ENCODE measurements at regions of chr16 and their contacts with region 1.

Region 1: DNA sequence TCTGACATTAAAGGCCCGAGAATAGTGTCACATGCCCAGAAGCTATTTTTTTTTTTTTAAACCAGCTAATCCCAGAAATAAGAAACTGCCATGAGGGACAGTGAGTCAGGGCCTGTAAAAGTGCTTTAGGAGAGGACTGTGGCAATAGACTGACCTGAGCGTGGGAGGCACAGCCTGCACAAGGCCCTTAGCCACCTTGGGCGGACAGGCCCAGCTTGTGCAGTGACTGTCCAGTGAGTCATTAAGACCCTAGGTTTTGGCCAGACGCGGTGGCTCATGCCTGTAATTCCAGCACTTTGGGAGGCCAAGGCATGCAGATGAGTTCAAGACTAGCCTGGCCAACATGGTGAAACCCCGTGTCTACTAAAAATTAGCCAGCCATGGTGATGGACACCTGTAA is 343.0 kb upstream of the ZFHX3 start:
- DNase-seq: peak; percentile 70
- H3K4me3 ChIP-seq: no peak overlapping the region
- H3K27me3 ChIP-seq: no peaks in the 10 kb centered on the region
- CTCF ChIP-seq: no peak

Region 2: DNA sequence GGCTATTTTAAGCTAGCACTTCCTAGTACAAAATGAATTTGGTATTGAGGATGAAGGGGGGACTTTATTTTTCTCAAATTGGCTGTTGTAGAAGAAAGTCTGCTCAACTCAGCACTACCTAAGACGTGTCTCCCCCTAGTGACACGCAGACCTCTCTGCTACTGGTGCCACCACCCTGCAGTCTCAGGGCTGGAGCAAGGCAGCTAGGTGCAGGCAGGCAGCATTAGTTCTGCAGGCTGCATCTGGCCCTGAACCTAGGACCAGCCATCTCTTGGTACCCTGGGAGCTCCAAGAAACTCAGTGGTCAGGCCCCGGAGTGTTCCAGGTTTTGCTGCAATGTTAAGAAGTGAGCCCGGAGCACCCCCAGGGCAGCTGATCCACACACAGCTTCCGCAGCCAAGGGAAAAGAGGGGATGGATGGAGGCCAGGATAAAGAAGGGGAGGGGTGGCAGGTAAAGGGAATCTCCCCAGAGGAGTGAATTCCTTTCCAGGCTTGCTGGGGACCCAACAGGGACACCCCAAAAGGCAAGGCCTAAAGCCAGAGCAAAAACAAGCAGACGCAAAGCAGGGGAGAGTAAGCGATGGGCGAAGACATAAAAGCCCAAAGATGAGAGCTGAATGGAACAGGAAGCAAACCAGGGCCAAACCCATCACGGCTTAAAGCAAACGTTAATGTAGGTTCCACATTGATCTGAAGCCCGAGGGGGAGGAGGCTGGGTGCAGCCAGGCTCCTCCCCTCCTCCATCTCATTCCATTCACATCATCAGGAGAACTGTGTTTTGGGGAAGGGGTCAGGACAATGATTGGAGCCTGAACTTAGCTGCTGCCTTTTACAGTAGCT is 543.5 kb before region 1 on chr16:
- CTCF ChIA-PET with region 1: no interaction called
- POLR2A ChIA-PET with region 1: interaction called, 19 read pairs
- DNase-seq: no peak
- H3K4me3 ChIP-seq: no peak overlapping the region
- H3K27me3 ChIP-seq: no peaks in the 10 kb centered on the region
- CTCF ChIP-seq: peak; percentile 50

Region 3: GRCh38 chr16:73106326-73106725 is 284.6 kb before region 1 on chr16:
- CTCF ChIA-PET with region 1: no interaction called
- POLR2A ChIA-PET with region 1: no interaction called
- DNase-seq: no peak
- H3K4me3 ChIP-seq: no peak overlapping the region
- H3K27me3 ChIP-seq: peaks cover 2% of the 10 kb centered on the region; the same call in 1 of the 2 replicates
- CTCF ChIP-seq: no peak

Measured in BJ (cell line).